ENCODE measurements at regions of chr15 and their contacts with region 1.

Region 1: DNA sequence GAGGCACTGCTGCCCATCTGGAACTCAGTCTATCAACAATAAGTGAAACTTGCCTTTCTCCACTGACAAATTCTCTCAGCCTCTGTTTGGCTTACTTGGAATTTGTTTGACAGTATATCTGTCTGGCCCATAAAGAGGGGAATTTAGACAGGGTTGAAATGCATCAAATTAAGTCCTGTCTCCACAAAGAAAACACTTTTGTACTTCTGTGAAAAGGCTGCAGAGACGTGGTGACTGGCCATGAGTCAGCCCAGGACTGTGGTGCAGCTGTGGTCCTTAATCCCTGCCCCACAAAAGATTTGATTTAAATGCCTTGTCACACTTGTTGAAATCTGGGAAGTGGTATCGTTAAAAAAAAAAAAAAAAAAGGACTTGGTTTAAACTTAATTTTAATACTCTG is 47.5 kb downstream of the RYR3 start:
- DNase-seq: no peak
- ATAC-seq: no peak
- H3K4me3 ChIP-seq: no peak overlapping the region
- H3K4me3 Mint-ChIP-seq: no peak overlapping the region
- H3K27ac ChIP-seq: no peak overlapping the region
- H3K27ac Mint-ChIP-seq: no peak overlapping the region
- H3K4me1 ChIP-seq: no peaks in the 10 kb centered on the region
- H3K4me1 Mint-ChIP-seq: no peaks in the 10 kb centered on the region
- H3K27me3 ChIP-seq: no peaks in the 10 kb centered on the region
- H3K27me3 Mint-ChIP-seq: peaks cover 28% of the 10 kb centered on the region
- CTCF ChIP-seq: no peak

Region 2: DNA sequence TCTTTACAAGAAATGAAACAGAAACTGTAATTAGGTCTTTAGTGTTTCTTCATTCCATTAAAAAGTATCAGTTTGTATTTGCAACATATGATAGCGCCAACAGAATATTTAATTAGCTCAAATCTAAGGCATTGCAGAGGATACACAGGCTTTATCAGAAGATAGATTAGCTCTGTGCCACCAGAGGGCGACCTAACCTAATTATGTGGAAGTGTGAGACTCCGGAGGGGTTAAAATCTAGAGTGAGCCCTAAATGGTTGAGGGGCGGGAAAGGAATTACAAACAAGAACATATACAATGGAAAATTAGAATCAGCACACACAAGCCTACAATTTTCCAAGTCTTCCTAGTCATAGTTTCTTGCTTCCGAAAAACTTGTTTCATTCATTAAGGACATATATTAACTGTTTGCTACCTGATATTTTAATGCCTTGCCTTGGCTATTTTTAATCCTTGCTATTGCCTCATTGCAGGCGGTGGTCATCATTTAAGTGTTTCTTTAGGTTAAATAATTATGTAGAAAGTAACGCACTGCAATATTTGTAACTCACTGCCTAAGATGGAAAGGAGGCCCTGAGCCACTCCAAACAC is 65.5 kb before region 1 on chr15:
- CTCF ChIA-PET with region 1: no interaction called
- POLR2A ChIA-PET with region 1: no interaction called
- intact Hi-C with region 1: loop called in 1 of 2 experiments (anchors 10 kb)
- DNase-seq: peak in 12 of 14 experiments; percentile 1 to 61 (median 23)
- ATAC-seq: no peak
- H3K4me3 ChIP-seq: no peak overlapping the region
- H3K4me3 Mint-ChIP-seq: no peak overlapping the region
- H3K27ac ChIP-seq: no peak overlapping the region
- H3K27ac Mint-ChIP-seq: no peak overlapping the region
- H3K4me1 ChIP-seq: no peaks in the 10 kb centered on the region
- H3K4me1 Mint-ChIP-seq: no peaks in the 10 kb centered on the region
- H3K27me3 ChIP-seq: no peaks in the 10 kb centered on the region
- H3K27me3 Mint-ChIP-seq: no peaks in the 10 kb centered on the region
- CTCF ChIP-seq: peak; percentile 64

Region 3: GRCh38 chr15:33742800-33743199 is 384.5 kb after region 1 on chr15:
- CTCF ChIA-PET with region 1: no interaction called
- POLR2A ChIA-PET with region 1: no interaction called
- intact Hi-C with region 1: no loop called
- DNase-seq: no peak
- ATAC-seq: no peak
- H3K4me3 ChIP-seq: no peak overlapping the region
- H3K4me3 Mint-ChIP-seq: no peak overlapping the region
- H3K27ac ChIP-seq: no peak overlapping the region
- H3K27ac Mint-ChIP-seq: no peak overlapping the region
- H3K4me1 ChIP-seq: no peaks in the 10 kb centered on the region
- H3K4me1 Mint-ChIP-seq: no peaks in the 10 kb centered on the region
- H3K27me3 ChIP-seq: no peaks in the 10 kb centered on the region
- H3K27me3 Mint-ChIP-seq: peaks cover 7% of the 10 kb centered on the region
- CTCF ChIP-seq: no peak